ENCODE measurements at regions of chr1 and their contacts with region 1.

Region 1: DNA sequence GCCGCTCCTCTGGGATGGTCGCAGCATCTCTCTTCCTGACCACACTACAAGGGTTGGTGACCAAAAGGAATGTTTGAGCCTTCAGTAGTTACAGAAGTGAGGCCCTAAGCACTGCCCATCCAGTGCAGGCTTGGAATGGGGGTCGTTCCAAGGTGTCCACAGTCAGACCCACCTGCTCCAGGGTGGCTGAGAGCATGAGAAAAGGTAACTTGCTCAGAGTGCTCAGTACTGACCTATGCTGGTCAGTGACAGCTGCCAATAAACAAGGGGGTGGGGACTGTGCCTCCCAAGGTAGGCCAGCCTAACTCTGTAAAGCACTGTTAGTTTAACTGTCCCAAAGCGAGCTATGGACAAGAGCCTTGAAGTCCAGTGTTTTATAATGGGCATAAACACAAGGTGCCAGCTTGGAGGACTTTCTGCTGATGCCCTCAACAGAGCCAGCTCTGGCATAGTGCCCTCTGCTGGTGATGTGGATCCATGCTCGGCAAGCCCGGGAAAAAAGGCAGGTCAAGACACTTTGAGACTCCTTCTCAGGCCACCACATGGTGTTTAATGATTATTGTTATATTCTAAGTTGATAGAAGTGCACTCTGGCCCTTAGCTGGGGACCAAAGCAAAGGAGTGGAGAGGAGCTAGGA is 78.1 kb upstream of the DNAH14 start:
- DNase-seq: peak; percentile 28 to 78
- H3K4me3 ChIP-seq: no peak overlapping the region
- H3K4me1 ChIP-seq: no peaks in the 10 kb centered on the region; the same call in 1 of the 2 replicates
- H3K27me3 ChIP-seq: 0 out of 2 replicates have a peak, but pooled peaks cover 3% of the 10 kb centered on the region

Region 2: GRCh38 chr1:224087286-224087794 is 764.0 kb before region 1 on chr1:
- in situ Hi-C with region 1: no loop called
- DNase-seq: no peak
- H3K4me3 ChIP-seq: no peak overlapping the region
- H3K4me1 ChIP-seq: peaks cover 1% of the 10 kb centered on the region
- H3K27me3 ChIP-seq: no peaks in the 10 kb centered on the region

Region 3: GRCh38 chr1:224700915-224701531 is 150.3 kb before region 1 on chr1:
- in situ Hi-C with region 1: loop called (anchors 10 kb)
- DNase-seq: peak; percentile 37 to 68
- H3K4me3 ChIP-seq: no peak overlapping the region
- H3K4me1 ChIP-seq: peaks cover 11% of the 10 kb centered on the region
- H3K27me3 ChIP-seq: no peaks in the 10 kb centered on the region

Region 4: GRCh38 chr1:224736619-224737352 is 114.5 kb before region 1 on chr1:
- in situ Hi-C with region 1: no loop called
- DNase-seq: no peak
- H3K4me3 ChIP-seq: no peak overlapping the region
- H3K4me1 ChIP-seq: peaks cover 8% of the 10 kb centered on the region
- H3K27me3 ChIP-seq: no peaks in the 10 kb centered on the region

Measured in HAP-1 (cell line).